IMR-90 (cell line): ENCODE measurements at regions of chr20 and their contacts with region 1.

Region 1: DNA sequence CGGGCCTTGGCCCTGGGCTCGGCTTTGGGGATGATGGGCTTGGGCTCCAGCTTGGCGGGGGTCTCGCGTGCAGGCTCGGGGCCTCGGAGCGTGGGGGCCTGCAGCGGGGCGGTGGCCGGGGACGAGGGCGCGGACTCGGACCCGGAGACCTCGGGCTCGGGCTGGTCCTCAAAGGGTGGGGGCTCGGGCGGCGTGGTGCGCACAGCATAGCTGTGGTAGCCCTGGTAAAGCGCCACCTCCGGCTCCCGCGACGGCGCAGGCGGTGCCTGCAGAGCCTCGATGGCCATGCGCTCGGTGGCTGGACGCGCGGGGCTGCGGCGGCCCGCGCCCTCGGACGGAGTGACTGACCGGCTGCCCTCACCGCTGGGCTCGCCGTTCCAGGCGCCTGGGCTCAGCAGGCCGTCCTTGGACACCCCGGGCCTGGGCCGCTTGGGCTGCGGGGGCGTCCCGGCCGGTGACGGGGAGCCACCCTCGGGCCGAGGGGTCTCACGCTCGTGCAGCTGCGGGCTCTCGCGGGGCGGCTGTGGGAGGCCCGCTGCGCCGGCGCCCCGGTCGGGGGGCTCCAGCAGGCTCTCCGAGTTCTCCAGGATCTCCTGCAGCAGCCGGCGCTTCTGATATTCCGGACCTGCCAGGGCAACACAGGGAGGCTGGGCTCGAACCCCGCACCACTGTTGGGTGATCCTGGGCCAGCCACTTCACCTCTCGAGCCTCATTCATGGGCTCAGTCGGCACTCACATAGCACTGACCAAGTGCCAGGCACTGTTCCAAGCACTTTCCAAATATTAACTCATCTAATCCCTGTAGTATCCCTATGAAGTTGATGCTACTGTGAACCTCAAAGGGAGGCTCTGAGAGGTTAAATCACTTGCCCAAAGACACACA is 71.0 kb downstream of the JPH2 start:
- DNase-seq: no peak
- ATAC-seq: peak; percentile 6; the same call in 1 of the 2 replicates
- H3K4me3 ChIP-seq: no peak overlapping the region
- H3K27ac ChIP-seq: no peak overlapping the region
- H3K4me1 ChIP-seq: peaks cover 1% of the 10 kb centered on the region; the same call in 1 of the 2 replicates
- H3K27me3 ChIP-seq: peaks cover 1% of the 10 kb centered on the region; the same call in 1 of the 2 replicates
- CTCF ChIP-seq: no peak
- POLR2A ChIP-seq: no peak
- RAD21 ChIP-seq: no peak

Region 2: DNA sequence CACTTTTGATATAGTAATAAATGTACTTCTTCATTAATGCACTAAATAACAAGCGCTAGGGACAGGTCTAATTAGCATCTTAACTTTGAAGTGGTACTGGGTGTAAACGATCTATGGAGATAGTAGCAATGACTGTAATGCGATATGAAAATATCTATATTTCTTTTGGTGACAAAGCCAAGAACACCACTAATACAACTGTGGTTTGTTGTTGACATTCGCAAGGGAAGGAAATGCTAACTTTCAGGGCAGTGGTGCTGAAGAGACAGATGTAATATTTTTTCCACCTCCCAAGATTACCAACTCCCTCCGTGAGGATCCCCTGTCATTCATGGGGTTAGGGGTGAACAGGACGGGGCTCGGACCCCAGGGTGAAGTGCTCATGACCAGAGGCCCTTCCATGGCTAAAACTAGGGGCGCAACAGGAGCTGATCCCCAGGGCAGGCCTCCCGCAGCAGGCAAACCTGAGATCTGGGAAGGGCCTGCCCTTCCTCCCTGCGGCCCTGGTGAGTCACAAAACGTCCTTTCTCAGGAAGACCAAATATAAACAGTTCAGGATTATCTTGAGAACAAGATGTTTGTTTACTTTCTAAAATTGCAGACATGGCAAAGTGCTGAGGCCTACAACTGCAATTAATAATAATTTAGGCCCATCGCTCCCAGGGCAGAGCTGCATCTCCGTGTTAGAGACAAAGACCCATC is 266.4 kb before region 1 on chr20:
- CTCF ChIA-PET with region 1: no interaction called
- POLR2A ChIA-PET with region 1: no interaction called
- dilution Hi-C with region 1: no loop called
- in situ Hi-C with region 1: no loop called
- intact Hi-C with region 1: no loop called
- DNase-seq: peak; percentile 81
- ATAC-seq: peak; percentile 80
- H3K4me3 ChIP-seq: no peak overlapping the region
- H3K27ac ChIP-seq: peak overlapping the region; percentile 70
- H3K4me1 ChIP-seq: peaks cover 10% of the 10 kb centered on the region
- H3K27me3 ChIP-seq: no peaks in the 10 kb centered on the region
- CTCF ChIP-seq: no peak
- POLR2A ChIP-seq: no peak
- RAD21 ChIP-seq: peak; percentile 16

Region 3: GRCh38 chr20:44187051-44187762 is 71.2 kb after region 1 on chr20 and contains the start of gene JPH2:
- CTCF ChIA-PET with region 1: interaction called, 67 read pairs
- POLR2A ChIA-PET with region 1: interaction called, 3 read pairs
- dilution Hi-C with region 1: no loop called
- in situ Hi-C with region 1: loop called (anchors 5 kb)
- intact Hi-C with region 1: loop called (anchors 1 kb)
- DNase-seq: peak; percentile 67
- ATAC-seq: peak; percentile 82
- H3K4me3 ChIP-seq: peak within 1 kb of the TSS; percentile 22
- H3K27ac ChIP-seq: peak within 1 kb of the TSS; percentile 83
- H3K4me1 ChIP-seq: peaks cover 13% of the 10 kb centered on the region
- H3K27me3 ChIP-seq: no peaks in the 10 kb centered on the region
- CTCF ChIP-seq: no peak
- POLR2A ChIP-seq: no peak
- RAD21 ChIP-seq: no peak
- total RNA-seq, gene JPH2: 0.54 and 0.83 TPM in 2 replicates

Region 4: GRCh38 chr20:44196271-44196670 is 80.3 kb after region 1 on chr20:
- CTCF ChIA-PET with region 1: interaction called, 67 read pairs
- POLR2A ChIA-PET with region 1: no interaction called
- dilution Hi-C with region 1: no loop called
- in situ Hi-C with region 1: no loop called
- intact Hi-C with region 1: no loop called
- DNase-seq: no peak
- ATAC-seq: no peak
- H3K4me3 ChIP-seq: no peak overlapping the region
- H3K27ac ChIP-seq: no peak overlapping the region
- H3K4me1 ChIP-seq: peaks cover 8% of the 10 kb centered on the region
- H3K27me3 ChIP-seq: no peaks in the 10 kb centered on the region
- CTCF ChIP-seq: no peak
- POLR2A ChIP-seq: no peak
- RAD21 ChIP-seq: no peak

Region 5: DNA sequence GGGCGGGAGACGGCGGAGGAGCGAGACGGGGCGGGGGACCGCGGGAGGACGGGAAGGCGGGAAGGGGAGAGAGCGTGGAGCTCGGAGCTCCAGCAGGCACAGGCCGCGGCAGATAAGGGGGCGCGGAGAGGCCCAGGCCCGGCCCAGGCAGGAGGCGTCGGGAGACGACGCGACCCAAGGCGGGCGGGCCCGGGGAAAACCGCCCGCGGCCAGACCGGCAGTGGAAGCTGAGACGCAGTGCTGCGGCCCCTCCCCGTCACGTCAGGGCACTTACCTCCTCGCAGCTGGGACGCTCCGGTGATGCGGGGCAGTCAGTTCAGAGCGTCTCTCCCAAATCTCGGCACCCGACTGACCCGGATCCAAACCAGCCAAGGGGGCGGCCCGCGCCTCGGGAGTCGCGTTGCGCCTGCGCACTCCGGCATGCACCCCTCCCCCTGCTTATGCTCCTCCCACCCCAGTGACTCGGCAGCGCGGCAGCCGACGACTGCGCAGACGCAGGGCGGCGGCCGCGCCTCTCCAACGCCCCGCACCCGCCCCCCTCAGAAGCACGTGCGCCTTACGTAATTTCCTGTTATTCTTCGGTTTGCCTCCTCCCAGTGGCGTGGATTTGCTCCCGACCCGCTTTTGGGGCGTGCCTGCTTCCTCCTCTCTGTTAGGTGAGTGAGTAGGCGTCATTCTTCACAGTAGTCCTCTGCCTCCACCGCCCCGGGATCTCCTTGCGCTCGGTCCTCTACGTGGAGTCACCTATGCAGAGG is 94.6 kb after region 1 on chr20 and contains the start of gene OSER1:
- CTCF ChIA-PET with region 1: interaction called, 5 read pairs
- POLR2A ChIA-PET with region 1: no interaction called
- dilution Hi-C with region 1: no loop called
- in situ Hi-C with region 1: no loop called
- intact Hi-C with region 1: loop called (anchors 1 kb)
- DNase-seq: peak; percentile 95
- ATAC-seq: peak; percentile 90
- H3K4me3 ChIP-seq: peak within 1 kb of the TSS; percentile 77
- H3K27ac ChIP-seq: peak within 1 kb of the TSS; percentile 75
- H3K4me1 ChIP-seq: peaks cover 4% of the 10 kb centered on the region; the same call in 1 of the 2 replicates
- H3K27me3 ChIP-seq: no peaks in the 10 kb centered on the region
- CTCF ChIP-seq: no peak
- POLR2A ChIP-seq: peak; percentile 92
- RAD21 ChIP-seq: no peak
- total RNA-seq, gene OSER1: 66.9 and 70.6 TPM in 2 replicates

Region 6: GRCh38 chr20:44310664-44311639 is 194.9 kb after region 1 on chr20 and contains the start of gene FITM2:
- CTCF ChIA-PET with region 1: interaction called, 3 read pairs
- POLR2A ChIA-PET with region 1: no interaction called
- dilution Hi-C with region 1: no loop called
- in situ Hi-C with region 1: loop called (anchors 5 kb)
- intact Hi-C with region 1: loop called (anchors 1 kb)
- DNase-seq: peak; percentile 96
- ATAC-seq: peak; percentile 96
- H3K4me3 ChIP-seq: peak within 1 kb of the TSS; percentile 79
- H3K27ac ChIP-seq: peak within 1 kb of the TSS; percentile 64
- H3K4me1 ChIP-seq: peaks cover 4% of the 10 kb centered on the region
- H3K27me3 ChIP-seq: peaks cover 2% of the 10 kb centered on the region; the same call in 1 of the 2 replicates
- CTCF ChIP-seq: peak; percentile 98
- POLR2A ChIP-seq: 0 out of 2 replicates have a peak, but pooled peaks have one; percentile 26
- RAD21 ChIP-seq: peak; percentile 87
- total RNA-seq, gene FITM2: 6.5 and 7.2 TPM in 2 replicates

Region 7: GRCh38 chr20:44460795-44461141 is 344.8 kb after region 1 on chr20:
- CTCF ChIA-PET with region 1: no interaction called
- POLR2A ChIA-PET with region 1: no interaction called
- dilution Hi-C with region 1: no loop called
- in situ Hi-C with region 1: no loop called
- intact Hi-C with region 1: loop called (anchors 5 kb)
- DNase-seq: peak; percentile 23
- ATAC-seq: peak; percentile 76
- H3K4me3 ChIP-seq: no peak overlapping the region
- H3K27ac ChIP-seq: no peak overlapping the region
- H3K4me1 ChIP-seq: no peaks in the 10 kb centered on the region
- H3K27me3 ChIP-seq: peaks cover 14% of the 10 kb centered on the region
- CTCF ChIP-seq: peak; percentile 57
- POLR2A ChIP-seq: no peak
- RAD21 ChIP-seq: peak; percentile 60